AG04450 (cell line): ENCODE measurements at regions of chr6 and their contacts with region 1.

Region 1: DNA sequence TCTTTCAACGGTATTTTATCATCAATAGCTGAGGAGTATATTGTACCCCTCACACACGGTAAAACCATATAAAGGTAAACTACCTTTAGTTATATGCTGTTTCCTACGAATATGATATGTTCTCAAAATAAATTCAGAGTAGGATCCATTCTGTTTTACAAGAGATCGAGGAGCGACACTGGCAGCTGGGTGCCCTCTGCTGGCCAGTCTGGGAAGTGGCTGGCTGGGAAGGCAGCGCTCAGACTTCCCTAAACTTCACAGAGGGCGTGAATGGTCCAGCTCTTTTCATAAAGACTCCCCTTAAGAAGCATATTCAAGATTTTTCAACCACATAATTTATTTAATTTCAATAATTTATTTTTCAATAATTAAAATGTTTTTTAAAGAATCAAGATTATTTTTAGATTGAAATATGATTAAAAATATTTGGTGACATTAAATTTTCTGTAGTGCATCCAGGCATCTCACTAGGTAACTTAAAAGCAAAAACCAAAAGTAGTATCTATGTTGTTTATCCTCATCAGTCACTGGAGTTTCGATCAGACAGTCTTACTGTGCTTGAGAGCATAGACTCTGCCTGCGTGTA is 187.5 kb upstream of the PDE10A start:
- DNase-seq: peak; percentile 23
- H3K4me3 ChIP-seq: no peak overlapping the region
- H3K27ac ChIP-seq: no peak overlapping the region
- H3K27me3 ChIP-seq: peaks cover 9% of the 10 kb centered on the region
- CTCF ChIP-seq: peak; percentile 99

Region 2: GRCh38 chr6:165439928-165440554 is 410.5 kb before region 1 on chr6:
- CTCF ChIA-PET with region 1: interaction called, 68 read pairs
- POLR2A ChIA-PET with region 1: no interaction called
- DNase-seq: peak; percentile 1
- H3K4me3 ChIP-seq: no peak overlapping the region
- H3K27ac ChIP-seq: no peak overlapping the region
- H3K27me3 ChIP-seq: no peaks in the 10 kb centered on the region
- CTCF ChIP-seq: peak; percentile 47

Region 3: GRCh38 chr6:165562421-165563090 is 288.0 kb before region 1 on chr6:
- CTCF ChIA-PET with region 1: no interaction called
- POLR2A ChIA-PET with region 1: no interaction called
- DNase-seq: no peak
- H3K4me3 ChIP-seq: no peak overlapping the region
- H3K27ac ChIP-seq: no peak overlapping the region
- H3K27me3 ChIP-seq: no peaks in the 10 kb centered on the region
- CTCF ChIP-seq: no peak

Region 4: DNA sequence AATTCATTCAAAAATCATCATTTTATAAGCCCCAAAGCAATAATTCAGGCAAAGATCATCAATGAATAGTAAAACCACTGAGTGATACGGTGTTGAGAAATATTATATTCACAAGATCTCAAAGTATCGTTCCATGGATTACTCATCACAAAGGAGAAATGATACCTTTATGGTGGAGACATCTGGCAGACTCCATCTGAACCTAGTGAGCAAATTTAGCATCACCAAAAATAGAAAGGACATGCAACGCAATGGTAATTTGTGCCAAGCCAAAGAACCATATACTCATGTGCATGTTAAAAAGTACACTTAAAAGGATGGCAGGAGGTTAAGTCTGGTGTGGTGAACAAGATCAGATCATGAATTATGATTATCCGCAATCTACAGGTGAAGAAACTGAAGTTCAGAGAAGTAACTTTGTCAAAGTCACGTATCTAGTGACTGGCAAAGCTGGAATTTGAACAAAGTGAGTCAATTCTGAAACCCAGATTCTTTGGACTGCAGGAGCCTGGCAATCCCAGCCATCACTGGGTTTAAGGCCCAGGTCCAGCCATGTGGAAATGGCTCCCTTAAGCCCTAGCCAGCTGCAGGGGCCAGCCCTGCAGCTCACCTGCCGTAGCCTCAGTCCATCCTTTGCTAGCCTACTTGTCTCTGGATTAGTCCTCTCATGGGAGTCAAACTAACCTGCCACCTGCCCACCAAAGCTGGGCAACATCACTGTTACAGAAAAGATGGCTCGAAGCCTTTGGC is 255.8 kb before region 1 on chr6:
- CTCF ChIA-PET with region 1: no interaction called
- POLR2A ChIA-PET with region 1: no interaction called
- DNase-seq: no peak
- H3K4me3 ChIP-seq: no peak overlapping the region
- H3K27ac ChIP-seq: no peak overlapping the region
- H3K27me3 ChIP-seq: no peaks in the 10 kb centered on the region
- CTCF ChIP-seq: no peak

Region 5: GRCh38 chr6:165729307-165729936 is 121.1 kb before region 1 on chr6:
- CTCF ChIA-PET with region 1: interaction called, 17 read pairs
- POLR2A ChIA-PET with region 1: no interaction called
- DNase-seq: no peak
- H3K4me3 ChIP-seq: no peak overlapping the region
- H3K27ac ChIP-seq: no peak overlapping the region
- H3K27me3 ChIP-seq: peaks cover 3% of the 10 kb centered on the region
- CTCF ChIP-seq: peak; percentile 75

Region 6: DNA sequence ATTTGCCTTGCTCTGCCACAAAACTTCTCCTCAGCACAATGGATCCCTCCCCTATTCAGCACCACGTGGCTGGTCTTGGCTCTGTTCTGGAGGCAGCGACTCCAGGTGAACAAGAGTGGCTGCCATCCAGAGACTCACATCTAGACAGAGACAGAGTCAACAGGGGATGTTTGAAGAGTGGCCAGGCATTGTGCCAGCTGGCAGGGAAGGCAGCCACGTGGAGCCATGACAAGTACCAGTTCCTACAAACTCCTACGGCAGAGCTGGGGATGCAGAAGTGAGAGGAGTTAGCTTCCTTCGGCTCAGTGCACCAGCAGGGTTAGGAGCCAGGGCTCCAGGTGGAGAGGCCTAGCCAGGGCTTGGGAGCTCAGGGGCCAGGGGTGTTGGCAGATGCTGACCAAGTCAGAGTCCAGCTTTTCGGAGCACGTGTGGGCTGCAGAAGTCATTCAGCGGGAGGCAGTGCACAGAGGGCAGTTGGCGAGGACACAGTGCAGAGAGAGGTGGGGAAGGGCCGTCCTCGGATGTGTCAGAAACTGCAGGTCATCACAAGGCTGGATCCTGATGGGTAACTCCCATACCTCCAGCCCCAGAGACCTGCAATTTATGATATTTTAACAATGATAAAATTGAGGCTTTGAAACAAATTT is 15.8 kb before region 1 on chr6:
- CTCF ChIA-PET with region 1: interaction called, 28 read pairs
- POLR2A ChIA-PET with region 1: no interaction called
- DNase-seq: no peak
- H3K4me3 ChIP-seq: no peak overlapping the region
- H3K27ac ChIP-seq: no peak overlapping the region
- H3K27me3 ChIP-seq: peaks cover 2% of the 10 kb centered on the region
- CTCF ChIP-seq: no peak

Region 7: DNA sequence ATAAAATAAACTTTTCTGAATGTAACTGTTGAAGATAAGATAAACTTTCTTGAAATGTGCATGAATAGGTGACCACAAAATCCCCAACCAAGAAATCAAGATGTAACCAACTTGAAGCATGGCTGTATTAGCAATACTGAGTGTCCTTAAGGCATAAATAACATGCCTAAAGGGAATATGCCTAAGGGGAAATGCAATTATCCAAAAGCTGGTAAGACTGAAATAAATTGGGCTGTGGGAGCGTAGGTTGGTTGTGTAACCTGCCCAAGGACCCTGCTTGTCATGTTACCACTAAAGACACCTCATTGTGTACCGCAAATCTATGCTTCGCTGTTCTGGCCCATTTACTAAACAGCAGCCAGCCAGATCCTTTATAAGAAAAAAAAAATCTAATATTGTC is 13.3 kb after region 1 on chr6:
- CTCF ChIA-PET with region 1: interaction called, 13 read pairs
- POLR2A ChIA-PET with region 1: no interaction called
- DNase-seq: no peak
- H3K4me3 ChIP-seq: no peak overlapping the region
- H3K27ac ChIP-seq: no peak overlapping the region
- H3K27me3 ChIP-seq: no peaks in the 10 kb centered on the region
- CTCF ChIP-seq: no peak

Region 8: GRCh38 chr6:165967768-165968408 is 117.4 kb after region 1 on chr6:
- CTCF ChIA-PET with region 1: no interaction called
- POLR2A ChIA-PET with region 1: no interaction called
- DNase-seq: no peak
- H3K4me3 ChIP-seq: no peak overlapping the region
- H3K27ac ChIP-seq: no peak overlapping the region
- H3K27me3 ChIP-seq: no peaks in the 10 kb centered on the region
- CTCF ChIP-seq: no peak